ENCODE measurements at regions of chr17 and their contacts with region 1.

Region 1: GRCh38 chr17:57995076-57995956 is 7.3 kb upstream of the VEZF1 start:
- DNase-seq: peak in 3 of 4 donors; percentile 40 to 77 (median 56)
- ATAC-seq: peak; percentile 93
- H3K4me3 ChIP-seq: no peak overlapping the region
- H3K27ac ChIP-seq: no peak overlapping the region
- H3K4me1 ChIP-seq: peaks cover 0 to 25% of the 10 kb centered on the region in 2 donors
- H3K27me3 ChIP-seq: no peaks in the 10 kb centered on the region
- CTCF ChIP-seq: peak; percentile 56 to 64

Region 2: DNA sequence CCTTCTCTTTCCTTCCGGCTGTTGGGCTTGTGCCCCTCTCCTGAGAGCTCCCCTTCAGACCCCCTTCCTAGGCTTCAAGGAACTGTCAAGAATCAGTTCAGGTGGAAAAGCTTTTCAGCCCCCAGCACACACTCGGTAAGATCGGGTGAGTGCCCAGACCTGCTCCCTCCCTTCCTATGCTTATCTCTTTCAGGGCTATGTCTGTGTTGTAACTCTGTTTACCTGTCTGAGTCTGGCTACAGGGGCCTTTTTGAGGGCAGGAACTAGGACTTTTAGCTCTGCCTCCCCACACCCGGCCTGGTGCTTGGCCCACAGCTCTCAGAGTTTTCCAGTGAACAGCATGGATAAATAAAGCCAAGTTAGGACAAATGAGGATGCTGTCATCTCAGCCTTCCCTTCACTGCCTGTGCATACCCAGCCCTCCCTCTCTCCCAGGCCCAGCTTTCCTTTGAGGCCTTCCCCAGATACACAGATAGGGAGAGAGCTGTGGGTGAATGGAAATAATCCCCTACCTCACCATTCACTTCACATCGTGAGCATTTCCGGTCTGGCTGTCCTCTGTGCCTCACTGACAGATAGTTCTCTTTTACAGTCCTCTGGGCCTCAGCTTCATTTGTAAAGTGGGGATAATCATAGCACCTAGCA is 139.8 kb before region 1 on chr17:
- intact Hi-C with region 1: loop called (anchors 5 to 10 kb)
- DNase-seq: no peak
- ATAC-seq: no peak
- H3K4me3 ChIP-seq: no peak overlapping the region
- H3K27ac ChIP-seq: no peak overlapping the region
- H3K4me1 ChIP-seq: peaks cover 16 to 22% of the 10 kb centered on the region in 2 donors
- H3K27me3 ChIP-seq: no peaks in the 10 kb centered on the region
- CTCF ChIP-seq: no peak

Region 3: DNA sequence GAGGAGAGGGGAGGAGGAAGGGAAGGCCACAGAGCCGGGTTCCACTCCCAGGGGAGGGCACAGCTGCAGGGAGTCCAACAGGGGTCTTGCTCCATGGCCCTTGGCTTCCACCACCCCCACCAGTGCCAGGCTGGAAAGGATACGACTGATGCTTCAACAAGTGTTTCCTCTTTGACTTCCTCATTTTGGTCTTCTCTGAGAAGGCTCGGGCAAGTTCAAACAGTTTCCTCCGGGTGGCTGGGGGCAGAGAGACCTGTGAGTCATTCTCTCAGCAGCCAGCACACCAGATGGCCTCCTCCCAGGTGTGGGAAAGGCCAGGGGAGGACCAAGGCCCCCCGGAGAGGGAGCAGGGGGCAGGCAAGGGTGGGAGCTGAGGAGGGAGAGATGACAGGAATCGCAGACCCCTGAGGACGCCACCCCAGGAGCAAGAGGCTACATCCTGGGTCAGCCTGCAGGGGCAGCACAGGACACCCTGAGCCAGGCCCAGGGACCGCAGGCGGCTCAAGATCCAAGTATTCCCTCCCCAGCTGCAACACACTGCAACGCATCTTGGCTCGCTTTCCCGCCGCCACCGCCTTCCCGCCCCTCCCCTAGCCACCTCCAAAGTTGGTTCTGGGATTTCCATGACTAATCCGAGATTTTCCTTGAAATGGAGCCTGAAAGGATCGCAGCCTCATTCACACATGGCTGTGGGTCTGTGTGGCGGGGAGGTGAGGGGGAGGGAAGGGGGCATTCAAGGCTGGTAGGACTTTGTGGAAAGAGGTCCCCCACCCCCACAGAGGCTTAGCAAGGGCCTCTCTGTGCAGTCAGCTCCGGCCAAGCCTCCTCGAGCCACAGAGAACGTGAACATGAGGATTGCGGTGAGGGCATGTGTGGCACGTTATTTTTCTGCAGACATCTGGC is 127.1 kb before region 1 on chr17:
- intact Hi-C with region 1: loop called (anchors 5 to 10 kb)
- DNase-seq: peak in 1 of 4 donors; percentile 73
- ATAC-seq: peak; percentile 74
- H3K4me3 ChIP-seq: no peak overlapping the region
- H3K27ac ChIP-seq: peak overlapping the region; percentile 34 to 83
- H3K4me1 ChIP-seq: peaks cover 21 to 38% of the 10 kb centered on the region in 2 donors
- H3K27me3 ChIP-seq: no peaks in the 10 kb centered on the region
- CTCF ChIP-seq: peak in 1 of 2 donors; percentile 30

Region 4: DNA sequence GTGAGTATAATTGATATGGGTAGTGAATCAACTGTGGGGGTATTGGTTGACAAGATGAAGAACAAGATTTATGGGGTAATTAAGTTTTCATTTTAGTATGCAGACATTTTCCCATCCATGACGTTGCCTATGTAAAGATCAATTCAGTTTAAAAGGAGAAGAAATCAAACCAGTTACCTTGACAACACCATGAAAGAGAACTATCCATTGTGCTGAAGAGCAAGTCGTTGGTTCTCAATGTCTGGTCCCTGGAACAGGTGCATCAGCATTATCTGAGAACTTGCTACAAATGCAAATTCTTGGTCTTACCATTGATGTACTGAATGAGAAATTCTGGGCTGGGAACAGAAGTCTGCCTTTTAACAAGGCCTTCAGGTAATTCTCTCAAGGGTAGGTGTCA is 170.7 kb after region 1 on chr17:
- intact Hi-C with region 1: no loop called
- DNase-seq: no peak
- ATAC-seq: no peak
- H3K4me3 ChIP-seq: no peak overlapping the region
- H3K27ac ChIP-seq: no peak overlapping the region
- H3K4me1 ChIP-seq: no peaks in the 10 kb centered on the region
- H3K27me3 ChIP-seq: peaks cover 5 to 21% of the 10 kb centered on the region in 2 donors
- CTCF ChIP-seq: no peak